ENCODE measurements at regions of chr3 and their contacts with region 1.

Region 1: DNA sequence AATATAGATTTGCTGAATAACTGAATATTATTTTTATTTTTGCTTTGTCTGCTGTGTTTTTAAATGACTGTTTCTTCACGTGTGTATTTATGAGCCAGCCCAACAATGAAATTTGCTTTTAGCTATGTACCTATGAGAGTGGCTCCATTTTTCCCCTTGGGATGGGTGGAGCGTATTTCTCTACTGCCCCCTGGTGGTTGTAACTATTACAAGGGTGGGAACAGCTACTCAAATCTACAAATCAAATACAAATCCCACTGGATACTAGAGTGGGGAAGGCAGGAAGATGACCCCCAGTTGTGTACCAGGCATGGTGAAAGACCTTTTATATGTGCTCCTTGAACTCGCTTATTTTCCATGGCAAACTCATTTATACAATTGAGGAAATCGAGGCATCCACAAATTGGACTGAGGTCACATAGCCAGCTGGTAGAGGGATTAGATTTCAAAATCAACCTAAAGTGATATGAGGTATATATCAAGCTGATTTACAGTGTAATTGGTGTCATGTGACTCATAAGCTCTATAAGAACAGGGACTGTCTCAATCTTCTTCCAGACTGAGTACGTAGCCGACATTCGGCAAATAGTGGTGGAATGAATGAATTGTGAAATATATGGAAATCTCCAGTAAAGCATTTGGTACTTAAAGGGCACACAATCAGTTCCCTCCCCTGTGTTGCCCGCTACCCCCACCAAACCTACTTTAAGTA is 69.5 kb upstream of the VEPH1 start:
- DNase-seq: peak in 1 of 3 donors; percentile 68
- ATAC-seq: peak; percentile 80
- H3K4me3 ChIP-seq: no peak overlapping the region
- H3K4me1 ChIP-seq: no peaks in the 10 kb centered on the region
- CTCF ChIP-seq: peak; percentile 54

Region 2: GRCh38 chr3:157532529-157533297 is 40.0 kb before region 1 on chr3:
- intact Hi-C with region 1: loop called in 1 of 2 experiments (anchors 2 kb)
- DNase-seq: peak in 1 of 3 donors; percentile 31
- ATAC-seq: peak; percentile 94
- H3K4me3 ChIP-seq: no peak overlapping the region
- H3K4me1 ChIP-seq: no peaks in the 10 kb centered on the region
- CTCF ChIP-seq: peak; percentile 30